ENCODE measurements at regions of chr10 and their contacts with region 1.

Region 1: GRCh38 chr10:79445141-79445976 is at the start of gene ZCCHC24:
- DNase-seq: peak; percentile 99
- ATAC-seq: peak; percentile 57 to 64
- H3K4me3 ChIP-seq: peak within 1 kb of the TSS; percentile 69 to 88 (median 71)
- H3K27ac ChIP-seq: peak within 1 kb of the TSS; percentile 91 to 98 (median 94)
- H3K4me1 ChIP-seq: peaks cover 69 to 78% of the 10 kb centered on the region in 2 donors
- H3K27me3 ChIP-seq: no peaks in the 10 kb centered on the region
- CTCF ChIP-seq: peak in 1 of 5 experiments; percentile 12
- POLR2A ChIP-seq: peak; percentile 97 to 98
- total RNA-seq, gene ZCCHC24: 59.6 to 122 (median 84.5) TPM

Region 2: DNA sequence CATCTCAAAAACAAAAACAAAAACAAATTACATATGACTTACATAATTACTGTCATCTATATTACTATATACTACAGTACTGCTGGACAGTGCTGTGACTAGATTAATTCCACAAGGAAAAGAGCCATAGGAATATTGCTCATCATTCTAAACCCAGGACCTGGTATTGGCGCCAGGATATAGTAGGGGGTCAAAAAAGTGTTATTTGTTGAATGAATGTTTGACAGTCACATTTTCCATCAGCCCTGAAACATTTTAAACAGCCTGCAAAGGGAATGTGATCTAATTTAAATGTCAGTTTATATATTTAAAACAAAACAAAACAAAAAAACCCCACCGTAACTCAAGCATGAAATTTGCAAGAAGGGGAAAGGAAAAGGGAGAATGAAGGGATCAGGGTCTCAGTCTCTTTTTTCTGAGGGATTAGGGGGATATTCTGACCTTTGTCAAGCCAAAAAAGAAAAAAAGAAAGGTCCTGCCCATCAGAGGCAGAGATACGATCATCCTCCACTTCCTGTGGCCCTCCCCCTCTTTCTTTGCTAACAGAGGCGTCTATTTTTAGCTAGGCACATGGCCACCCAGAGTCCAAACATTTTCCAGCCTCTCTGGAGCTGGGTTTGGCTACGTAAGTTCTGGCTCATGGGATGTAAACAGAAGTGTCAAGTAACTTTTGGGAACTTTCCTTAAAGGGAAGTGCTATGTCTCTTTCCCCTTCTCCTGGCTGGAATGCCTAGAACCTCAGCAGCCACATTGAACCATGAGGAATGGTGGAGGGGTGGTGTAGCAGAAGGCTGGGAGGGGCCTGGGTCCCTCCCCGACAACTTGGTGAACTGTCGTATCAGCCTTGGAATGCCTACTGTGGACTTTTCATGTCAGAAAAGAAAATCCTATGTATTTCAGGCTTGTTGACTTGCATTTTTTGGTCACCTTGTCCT is 1474.2 kb before region 1 on chr10:
- in situ Hi-C with region 1: no loop called
- intact Hi-C with region 1: loop called (anchors 5 kb)
- DNase-seq: peak; percentile 90 to 94
- ATAC-seq: peak; percentile 94 to 96
- H3K4me3 ChIP-seq: peak overlapping the region; percentile 19 to 38 (median 32)
- H3K27ac ChIP-seq: peak overlapping the region; percentile 86 to 95 (median 90)
- H3K4me1 ChIP-seq: peaks cover 31 to 52% of the 10 kb centered on the region in 2 donors
- H3K27me3 ChIP-seq: no peaks in the 10 kb centered on the region
- CTCF ChIP-seq: no peak
- POLR2A ChIP-seq: peak in 1 of 2 donors; percentile 59

Region 3: GRCh38 chr10:78931321-78932053 is 513.9 kb before region 1 on chr10:
- in situ Hi-C with region 1: no loop called
- intact Hi-C with region 1: no loop called
- DNase-seq: peak in 1 of 2 donors; percentile 63
- ATAC-seq: peak in 1 of 2 donors; percentile 2
- H3K4me3 ChIP-seq: no peak overlapping the region
- H3K27ac ChIP-seq: peak overlapping the region in 1 of 4 donors; percentile 8
- H3K4me1 ChIP-seq: peaks cover 0 to 4% of the 10 kb centered on the region in 2 donors
- H3K27me3 ChIP-seq: no peaks in the 10 kb centered on the region
- CTCF ChIP-seq: no peak
- POLR2A ChIP-seq: no peak

Region 4: GRCh38 chr10:79249186-79250121 is 195.9 kb before region 1 on chr10:
- in situ Hi-C with region 1: no loop called
- intact Hi-C with region 1: no loop called
- DNase-seq: no peak
- ATAC-seq: peak; percentile 7 to 14
- H3K4me3 ChIP-seq: no peak overlapping the region
- H3K27ac ChIP-seq: peak overlapping the region in 3 of 4 donors; percentile 27 to 79 (median 65)
- H3K4me1 ChIP-seq: peaks cover 62 to 65% of the 10 kb centered on the region in 2 donors
- H3K27me3 ChIP-seq: no peaks in the 10 kb centered on the region
- CTCF ChIP-seq: no peak
- POLR2A ChIP-seq: no peak

Region 5: DNA sequence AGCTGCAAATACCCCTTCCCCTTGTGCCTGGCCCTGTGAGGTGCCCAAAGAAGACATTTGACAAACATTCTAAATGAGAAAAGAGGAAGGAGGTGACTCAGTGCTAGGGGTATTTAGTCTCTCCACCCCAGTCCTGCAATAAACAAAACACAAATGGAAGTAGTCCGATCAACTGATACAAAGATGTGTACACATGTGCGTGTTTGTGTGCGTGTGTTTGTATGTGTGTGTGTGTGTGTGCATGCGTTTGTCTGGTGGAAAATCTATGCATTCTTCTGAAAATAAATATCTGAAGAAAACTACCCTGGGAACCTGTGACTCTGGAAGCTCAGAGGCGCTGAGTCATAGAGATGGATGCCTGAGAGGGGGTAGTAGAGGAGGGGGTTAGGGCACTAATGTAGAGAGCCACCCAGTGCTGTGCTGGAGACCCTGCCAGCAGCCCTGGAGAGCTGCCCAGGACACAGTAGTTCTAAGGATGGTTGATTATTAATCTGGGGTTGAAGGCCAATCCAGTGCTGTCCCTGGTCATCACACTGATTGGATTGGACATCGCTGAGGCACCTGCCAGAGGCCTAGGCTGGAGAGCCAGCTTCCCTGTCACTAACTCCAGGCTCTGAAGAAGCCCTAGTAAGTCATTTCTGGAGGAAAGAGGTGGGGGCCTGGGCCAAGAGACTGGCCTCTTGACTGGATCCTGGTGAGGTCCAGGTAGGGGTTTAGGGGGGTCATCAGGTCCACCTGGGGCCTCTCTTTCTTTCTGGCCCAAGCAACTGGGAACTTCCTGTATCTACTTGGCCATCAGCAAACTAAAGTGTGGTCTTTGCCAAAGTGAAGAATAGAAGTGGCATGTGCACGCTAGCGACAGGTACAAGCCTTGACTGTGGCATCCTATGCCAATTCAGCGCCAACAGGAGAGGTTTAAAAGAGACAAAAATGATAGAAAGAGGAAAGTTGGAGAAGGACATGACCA is 183.9 kb after region 1 on chr10:
- in situ Hi-C with region 1: no loop called
- intact Hi-C with region 1: no loop called
- DNase-seq: no peak
- ATAC-seq: no peak
- H3K4me3 ChIP-seq: no peak overlapping the region
- H3K27ac ChIP-seq: no peak overlapping the region
- H3K4me1 ChIP-seq: no peaks in the 10 kb centered on the region
- H3K27me3 ChIP-seq: no peaks in the 10 kb centered on the region
- CTCF ChIP-seq: no peak
- POLR2A ChIP-seq: no peak

Measured in gastrocnemius medialis (tissue), 4 donors.